ENCODE measurements at regions of chr9 and their contacts with region 1.

Region 1: GRCh38 chr9:69186841-69187611 is 12.9 kb downstream of the TJP2 start:
- DNase-seq: peak; percentile 70
- H3K4me3 ChIP-seq: no peak overlapping the region
- H3K27ac ChIP-seq: peak overlapping the region; percentile 49
- H3K4me1 ChIP-seq: peaks cover 38% of the 10 kb centered on the region
- H3K27me3 ChIP-seq: no peaks in the 10 kb centered on the region
- CTCF ChIP-seq: no peak
- POLR2A ChIP-seq: no peak

Region 2: DNA sequence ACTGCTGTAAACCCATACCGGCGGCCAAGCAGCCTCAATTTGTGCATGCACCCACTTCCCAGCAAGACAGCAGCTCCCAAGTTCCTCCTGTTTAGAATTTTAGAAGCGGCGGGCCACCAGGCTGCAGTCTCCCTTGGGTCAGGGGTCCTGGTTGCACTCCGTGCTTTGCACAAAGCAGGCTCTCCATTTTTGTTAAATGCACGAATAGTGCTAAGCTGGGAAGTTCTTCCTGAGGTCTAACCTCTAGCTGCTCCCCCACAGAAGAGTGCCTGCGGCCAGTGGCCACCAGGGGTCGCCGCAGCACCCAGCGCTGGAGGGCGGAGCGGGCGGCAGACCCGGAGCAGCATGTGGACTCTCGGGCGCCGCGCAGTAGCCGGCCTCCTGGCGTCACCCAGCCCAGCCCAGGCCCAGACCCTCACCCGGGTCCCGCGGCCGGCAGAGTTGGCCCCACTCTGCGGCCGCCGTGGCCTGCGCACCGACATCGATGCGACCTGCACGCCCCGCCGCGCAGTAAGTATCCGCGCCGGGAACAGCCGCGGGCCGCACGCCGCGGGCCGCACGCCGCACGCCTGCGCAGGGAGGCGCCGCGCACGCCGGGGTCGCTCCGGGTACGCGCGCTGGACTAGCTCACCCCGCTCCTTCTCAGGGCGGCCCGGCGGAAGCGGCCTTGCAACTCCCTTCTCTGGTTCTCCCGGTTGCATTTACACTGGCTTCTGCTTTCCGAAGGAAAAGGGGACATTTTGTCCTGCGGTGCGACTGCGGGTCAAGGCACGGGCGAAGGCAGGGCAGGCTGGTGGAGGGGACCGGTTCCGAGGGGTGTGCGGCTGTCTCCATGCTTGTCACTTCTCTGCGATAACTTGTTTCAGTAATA is 151.4 kb before region 1 on chr9 and contains the start of gene FXN:
- CTCF ChIA-PET with region 1: interaction called, 63 read pairs
- POLR2A ChIA-PET with region 1: no interaction called
- dilution Hi-C with region 1: no loop called
- intact Hi-C with region 1: no loop called
- DNase-seq: peak; percentile 85
- H3K4me3 ChIP-seq: peak within 1 kb of the TSS; percentile 44 to 81 (median 67)
- H3K27ac ChIP-seq: peak within 1 kb of the TSS; percentile 31
- H3K4me1 ChIP-seq: peaks cover 18% of the 10 kb centered on the region
- H3K27me3 ChIP-seq: no peaks in the 10 kb centered on the region
- CTCF ChIP-seq: peak; percentile 99 to 100
- POLR2A ChIP-seq: peak; percentile 52
- total RNA-seq, gene FXN: 17.1 and 21.2 TPM in 2 replicates

Region 3: DNA sequence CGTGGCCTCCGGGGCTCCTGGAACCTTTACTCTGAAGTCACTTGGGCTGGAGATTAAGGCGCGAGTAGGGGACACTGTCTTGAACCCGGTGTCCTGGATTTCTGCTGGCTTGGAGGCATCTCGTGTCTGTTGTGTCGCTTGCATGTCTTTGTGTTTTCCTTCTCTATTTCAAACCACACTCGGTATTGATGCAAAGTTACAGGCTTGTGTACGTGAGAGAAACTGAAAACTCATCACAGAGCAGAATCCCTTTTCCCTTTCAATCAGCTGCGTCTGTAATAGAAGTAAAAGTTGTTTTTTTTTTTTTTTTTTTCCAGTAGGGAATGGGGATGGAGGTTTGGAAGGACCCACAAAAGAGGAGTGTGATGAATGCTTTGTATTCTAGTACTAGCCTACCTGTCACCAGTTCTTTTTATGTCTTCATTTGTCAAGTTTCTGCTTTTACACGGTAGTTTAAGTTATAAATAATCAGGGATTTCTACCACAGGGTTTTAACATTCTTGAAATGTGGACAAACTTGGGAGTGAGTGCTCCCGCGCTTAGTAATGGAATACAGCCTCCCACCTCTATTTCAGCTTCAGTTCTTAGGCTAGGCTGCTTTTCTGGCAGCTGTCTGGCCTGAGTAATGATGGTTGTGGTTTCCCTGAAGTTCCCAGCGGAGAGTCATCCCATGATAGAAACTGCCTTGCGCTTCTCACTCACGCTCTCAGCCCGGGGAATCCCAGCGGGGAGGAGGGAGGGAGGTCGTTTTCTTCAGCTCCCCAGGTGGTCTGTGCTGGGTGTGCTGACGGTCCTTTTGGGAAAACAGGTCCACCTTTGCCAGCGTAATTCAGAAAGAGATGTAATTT is 12.2 kb before region 1 on chr9:
- CTCF ChIA-PET with region 1: interaction called, 11 read pairs
- POLR2A ChIA-PET with region 1: interaction called, 3 read pairs
- dilution Hi-C with region 1: no loop called
- intact Hi-C with region 1: no loop called
- DNase-seq: peak; percentile 57
- H3K4me3 ChIP-seq: peak overlapping the region; percentile 60 to 73 (median 64)
- H3K27ac ChIP-seq: peak overlapping the region; percentile 81
- H3K4me1 ChIP-seq: peaks cover 70% of the 10 kb centered on the region
- H3K27me3 ChIP-seq: no peaks in the 10 kb centered on the region
- CTCF ChIP-seq: no peak
- POLR2A ChIP-seq: no peak

Region 4: GRCh38 chr9:69199769-69200470 is 12.9 kb after region 1 on chr9:
- CTCF ChIA-PET with region 1: no interaction called
- POLR2A ChIA-PET with region 1: no interaction called
- dilution Hi-C with region 1: no loop called
- intact Hi-C with region 1: no loop called
- DNase-seq: no peak
- H3K4me3 ChIP-seq: no peak overlapping the region
- H3K27ac ChIP-seq: no peak overlapping the region
- H3K4me1 ChIP-seq: no peaks in the 10 kb centered on the region
- H3K27me3 ChIP-seq: no peaks in the 10 kb centered on the region
- CTCF ChIP-seq: no peak
- POLR2A ChIP-seq: no peak